HCT116 (cell line): ENCODE measurements at regions of chr2 and their contacts with region 1.

Region 1: DNA sequence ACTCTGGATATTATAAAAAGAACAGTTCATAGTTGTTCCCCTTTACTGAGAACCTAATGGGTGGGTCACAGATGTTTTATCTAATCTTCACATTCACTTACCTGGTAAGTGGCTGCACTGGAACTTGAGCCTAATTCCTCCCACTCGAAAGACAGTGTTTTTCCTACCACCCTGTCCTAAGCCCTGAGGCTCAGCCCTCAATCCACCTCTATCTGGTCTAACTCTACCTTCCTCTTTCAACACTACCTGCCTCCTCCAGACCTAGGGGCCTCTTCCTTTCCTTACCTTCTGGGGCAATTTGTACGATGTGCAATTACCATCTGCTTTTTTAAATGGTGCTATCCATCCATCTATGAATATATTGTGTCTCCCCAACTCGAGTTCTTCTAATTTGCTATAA is 9.7 kb upstream of the KIF3C start:
- DNase-seq: no peak
- ATAC-seq: peak; percentile 39
- H3K4me3 ChIP-seq: no peak overlapping the region
- H3K27ac ChIP-seq: no peak overlapping the region
- H3K4me1 ChIP-seq: peaks cover 5 to 11% of the 10 kb centered on the region in 2 experiments; a peak in 2 of 4 replicates
- H3K27me3 ChIP-seq: no peaks in the 10 kb centered on the region
- CTCF ChIP-seq: no peak
- POLR2A ChIP-seq: no peak
- RAD21 ChIP-seq: no peak

Region 2: GRCh38 chr2:26033818-26034636 is 42.1 kb after region 1 on chr2 and contains the start of gene RAB10:
- CTCF ChIA-PET with region 1: interaction called, 3 read pairs
- POLR2A ChIA-PET with region 1: interaction called, 5 read pairs
- RAD21 ChIA-PET with region 1: no interaction called
- intact Hi-C with region 1: loop called (anchors 2 kb)
- DNase-seq: peak; percentile 98
- ATAC-seq: peak; percentile 94
- H3K4me3 ChIP-seq: peak within 1 kb of the TSS; percentile 90 to 99
- H3K27ac ChIP-seq: peak within 1 kb of the TSS; percentile 98
- H3K4me1 ChIP-seq: peaks cover 12 to 33% of the 10 kb centered on the region in 2 experiments
- H3K27me3 ChIP-seq: no peaks in the 10 kb centered on the region
- CTCF ChIP-seq: no peak
- POLR2A ChIP-seq: peak; percentile 76
- RAD21 ChIP-seq: no peak
- total RNA-seq, gene RAB10: 167 TPM

Region 3: GRCh38 chr2:26068602-26069298 is 76.8 kb after region 1 on chr2:
- CTCF ChIA-PET with region 1: no interaction called
- POLR2A ChIA-PET with region 1: no interaction called
- RAD21 ChIA-PET with region 1: no interaction called
- intact Hi-C with region 1: loop called (anchors 5 kb)
- DNase-seq: peak; percentile 46
- ATAC-seq: peak; percentile 85
- H3K4me3 ChIP-seq: peak overlapping the region in 1 of 2 experiments; percentile 21; a peak in 2 of 4 replicates
- H3K27ac ChIP-seq: peak overlapping the region; percentile 50; the same call in 1 of the 2 replicates
- H3K4me1 ChIP-seq: peaks cover 20 to 45% of the 10 kb centered on the region in 2 experiments
- H3K27me3 ChIP-seq: no peaks in the 10 kb centered on the region
- CTCF ChIP-seq: no peak
- POLR2A ChIP-seq: no peak
- RAD21 ChIP-seq: 0 out of 2 replicates have a peak, but pooled peaks have one; percentile 4